ENCODE measurements at regions of chr3 and their contacts with region 1.

Region 1: GRCh38 chr3:179166561-179167201 is 18.5 kb downstream of the PIK3CA start:
- DNase-seq: peak; percentile 41
- H3K4me3 ChIP-seq: peak overlapping the region; percentile 56
- H3K27ac ChIP-seq: peak overlapping the region; percentile 71
- H3K4me1 ChIP-seq: peaks cover 54% of the 10 kb centered on the region
- CTCF ChIP-seq: no peak

Region 2: DNA sequence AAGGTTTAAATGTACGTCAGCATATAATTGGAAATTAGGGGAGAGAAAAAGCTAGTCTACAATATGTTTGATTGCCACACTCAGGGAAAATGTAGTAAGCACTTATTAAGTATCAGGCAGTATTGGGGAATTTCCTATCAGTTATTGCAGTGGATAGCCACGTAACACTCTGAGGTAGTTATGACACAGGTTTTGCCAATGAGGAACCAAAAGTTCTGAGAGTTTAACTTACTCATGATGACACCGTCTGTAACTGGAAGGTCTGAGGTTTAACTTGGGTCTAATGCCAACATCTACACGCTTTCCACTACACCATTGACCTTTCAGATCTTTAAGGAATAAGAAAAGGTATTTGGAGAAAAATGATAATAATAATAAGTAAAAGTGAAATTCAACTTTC is 184.5 kb before region 1 on chr3:
- CTCF ChIA-PET with region 1: no interaction called
- POLR2A ChIA-PET with region 1: no interaction called
- intact Hi-C with region 1: no loop called
- DNase-seq: no peak
- H3K4me3 ChIP-seq: no peak overlapping the region
- H3K27ac ChIP-seq: no peak overlapping the region
- H3K4me1 ChIP-seq: no peaks in the 10 kb centered on the region
- CTCF ChIP-seq: no peak

Region 3: DNA sequence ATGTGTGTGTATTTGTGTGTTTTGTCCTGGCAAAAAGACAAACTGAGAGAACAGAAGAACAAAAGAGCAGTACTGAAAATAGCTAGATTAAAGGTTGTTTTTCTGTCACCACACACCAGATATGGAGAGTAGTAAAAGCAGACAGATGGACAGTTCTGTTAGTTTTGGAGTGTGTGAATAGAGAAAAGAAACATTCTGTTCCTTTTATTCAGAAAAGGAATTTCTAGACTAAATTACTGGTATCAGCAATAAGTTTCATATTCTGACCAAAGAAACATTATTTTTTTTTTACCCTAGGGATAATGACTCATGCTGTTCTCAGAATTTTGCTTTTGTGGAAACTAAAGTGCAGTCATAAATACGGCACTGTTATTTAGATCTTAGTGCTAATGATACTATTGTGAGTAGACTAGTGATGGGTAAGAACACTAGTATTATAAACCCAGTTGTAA is 14.4 kb after region 1 on chr3:
- CTCF ChIA-PET with region 1: no interaction called
- POLR2A ChIA-PET with region 1: interaction called, 14 read pairs
- intact Hi-C with region 1: no loop called
- DNase-seq: no peak
- H3K4me3 ChIP-seq: no peak overlapping the region
- H3K27ac ChIP-seq: no peak overlapping the region
- H3K4me1 ChIP-seq: peaks cover under 1% of the 10 kb centered on the region
- CTCF ChIP-seq: no peak

Measured in OCI-LY7 (cell line).